Activated CD4-positive, alpha-beta memory T cell treated with anti-CD3 and anti-CD28 coated beads for 36 hours (primary cell): ENCODE measurements at regions of chr7 and their contacts with region 1.

Region 1: DNA sequence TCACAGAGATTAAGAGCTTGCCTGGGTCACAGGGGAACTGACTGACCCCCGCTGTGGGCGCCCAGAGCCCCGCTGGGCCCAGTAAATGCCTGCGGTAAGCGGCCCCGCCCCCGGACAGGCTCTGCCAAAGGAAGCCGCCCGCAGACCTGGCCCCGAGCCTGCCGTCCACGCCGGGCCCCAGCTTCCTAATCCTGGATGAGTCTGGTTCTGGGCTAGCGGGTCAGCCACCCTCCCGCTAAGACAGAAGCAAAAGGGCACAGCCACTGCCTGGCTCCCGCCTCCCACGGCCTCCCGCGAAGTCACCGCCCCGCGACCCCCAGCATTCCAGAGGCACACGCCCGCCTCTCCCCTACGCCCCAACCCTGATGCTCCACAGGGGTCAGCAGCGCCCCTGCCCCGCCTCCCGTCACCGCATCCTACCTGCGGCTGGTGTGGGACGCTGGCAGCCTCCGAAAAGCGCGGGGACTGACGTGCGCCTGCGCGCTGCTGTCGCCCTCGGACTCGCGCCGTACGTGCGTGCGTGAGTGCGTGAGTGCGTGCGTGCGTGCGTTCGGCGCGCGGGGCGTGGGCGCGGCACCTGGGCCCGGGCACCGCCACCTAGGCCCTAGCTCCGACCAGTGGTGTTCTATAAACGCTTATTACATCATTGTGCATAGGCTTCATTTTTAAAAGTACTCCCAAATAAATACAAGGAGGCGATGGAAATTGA is at the start of gene FIGNL1:
- DNase-seq: peak; percentile 90
- H3K4me3 Mint-ChIP-seq: peak within 1 kb of the TSS; percentile 92
- H3K27ac Mint-ChIP-seq: peak within 1 kb of the TSS; percentile 91
- H3K4me1 Mint-ChIP-seq: peaks cover 48% of the 10 kb centered on the region
- H3K27me3 Mint-ChIP-seq: no peaks in the 10 kb centered on the region
- total RNA-seq, gene FIGNL1: 46.2 to 49.0 TPM

Region 2: GRCh38 chr7:50197549-50197948 is 252.5 kb before region 1 on chr7:
- CTCF ChIA-PET with region 1: no interaction called
- POLR2A ChIA-PET with region 1: no interaction called
- intact Hi-C with region 1: loop called (anchors 2 kb)
- DNase-seq: peak; percentile 90
- H3K4me3 Mint-ChIP-seq: peak overlapping the region; percentile 13
- H3K27ac Mint-ChIP-seq: peak overlapping the region; percentile 58
- H3K4me1 Mint-ChIP-seq: peaks cover 34% of the 10 kb centered on the region
- H3K27me3 Mint-ChIP-seq: peaks cover 2% of the 10 kb centered on the region

Region 3: DNA sequence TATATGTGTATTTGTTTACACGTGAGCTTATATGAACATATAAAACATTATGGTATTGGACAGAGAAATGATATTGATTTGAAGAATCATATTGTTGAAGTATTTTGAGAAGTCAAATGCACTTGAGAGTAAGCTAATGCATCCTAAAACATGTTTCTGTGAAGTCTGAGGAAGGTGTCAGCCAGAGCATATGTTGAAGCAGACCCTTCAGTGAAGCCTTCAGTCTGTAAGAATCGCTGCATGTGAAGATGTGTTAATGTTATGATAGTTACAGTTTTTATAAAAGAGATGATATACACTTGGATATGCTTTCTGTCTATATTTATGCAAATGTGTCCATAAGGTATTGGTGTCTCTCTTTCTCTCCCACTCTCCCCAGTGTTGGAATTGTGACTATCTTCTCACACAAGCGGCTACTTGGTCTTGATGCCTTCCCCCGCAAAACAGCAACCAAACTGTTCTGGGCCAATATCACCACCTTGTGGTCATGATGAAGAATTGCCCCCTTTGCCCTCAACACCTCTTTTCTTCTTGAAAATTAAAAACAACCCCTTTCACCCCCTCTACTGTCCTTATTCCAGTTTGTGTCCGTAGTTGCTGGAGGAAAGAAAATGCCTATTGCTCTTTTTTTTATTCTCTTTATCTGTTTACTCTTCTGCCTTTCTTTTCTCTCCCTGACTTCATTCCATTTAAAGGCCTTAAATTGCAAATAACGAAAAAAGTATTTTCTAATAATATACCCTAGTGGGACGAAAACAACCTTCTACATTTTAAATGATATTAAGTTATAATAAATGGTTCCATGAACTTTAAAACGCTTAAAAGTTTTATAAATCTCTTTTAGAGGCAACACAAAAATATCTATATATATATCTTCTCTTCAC is 80.7 kb before region 1 on chr7:
- CTCF ChIA-PET with region 1: interaction called, 4 read pairs
- POLR2A ChIA-PET with region 1: interaction called, 3 read pairs
- intact Hi-C with region 1: loop called (anchors 1 kb)
- DNase-seq: peak; percentile 56
- H3K4me3 Mint-ChIP-seq: no peak overlapping the region
- H3K27ac Mint-ChIP-seq: peak overlapping the region; percentile 93
- H3K4me1 Mint-ChIP-seq: peaks cover 97% of the 10 kb centered on the region
- H3K27me3 Mint-ChIP-seq: no peaks in the 10 kb centered on the region

Region 4: DNA sequence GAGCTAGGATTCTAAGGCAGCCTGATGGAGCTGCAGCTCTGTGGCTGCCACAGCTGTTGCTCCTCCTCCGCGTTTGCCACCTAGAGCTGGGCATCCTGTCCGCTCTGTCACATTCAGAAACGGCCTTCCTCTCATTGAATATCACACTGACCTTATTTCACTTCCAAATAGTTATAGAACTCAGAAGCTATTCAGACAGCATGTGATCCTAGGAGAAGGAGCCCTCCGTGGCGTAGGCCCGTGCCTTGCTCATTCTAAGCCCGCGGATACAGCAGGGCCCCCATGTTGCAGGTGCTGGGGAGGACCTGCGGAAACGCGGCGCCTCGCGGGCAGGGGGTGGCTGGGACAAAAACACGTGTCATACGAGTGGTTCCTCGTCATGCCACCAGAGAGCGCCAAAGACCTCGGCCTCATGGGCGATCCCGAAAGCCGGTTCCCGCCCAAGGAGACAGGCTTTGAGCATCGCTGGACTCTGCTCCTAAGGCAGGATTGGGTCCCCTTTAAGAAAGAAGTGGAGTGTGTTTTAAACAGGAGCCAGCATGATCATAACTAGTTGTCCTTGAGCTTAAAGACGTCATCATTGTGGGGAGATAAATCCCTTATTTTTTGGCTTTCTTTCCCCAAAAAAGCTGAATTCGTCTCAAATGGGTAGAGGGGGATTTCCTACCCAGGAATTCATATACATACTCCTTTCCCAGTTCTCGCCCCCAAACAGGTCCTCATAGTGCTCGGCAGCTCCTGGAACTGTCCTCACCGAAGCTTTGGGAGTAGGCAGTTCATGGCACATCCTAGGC is 18.0 kb after region 1 on chr7:
- CTCF ChIA-PET with region 1: interaction called, 18 read pairs
- POLR2A ChIA-PET with region 1: no interaction called
- intact Hi-C with region 1: no loop called
- DNase-seq: peak; percentile 89
- H3K4me3 Mint-ChIP-seq: no peak overlapping the region
- H3K27ac Mint-ChIP-seq: no peak overlapping the region
- H3K4me1 Mint-ChIP-seq: peaks cover 12% of the 10 kb centered on the region
- H3K27me3 Mint-ChIP-seq: peaks cover 2% of the 10 kb centered on the region

Region 5: DNA sequence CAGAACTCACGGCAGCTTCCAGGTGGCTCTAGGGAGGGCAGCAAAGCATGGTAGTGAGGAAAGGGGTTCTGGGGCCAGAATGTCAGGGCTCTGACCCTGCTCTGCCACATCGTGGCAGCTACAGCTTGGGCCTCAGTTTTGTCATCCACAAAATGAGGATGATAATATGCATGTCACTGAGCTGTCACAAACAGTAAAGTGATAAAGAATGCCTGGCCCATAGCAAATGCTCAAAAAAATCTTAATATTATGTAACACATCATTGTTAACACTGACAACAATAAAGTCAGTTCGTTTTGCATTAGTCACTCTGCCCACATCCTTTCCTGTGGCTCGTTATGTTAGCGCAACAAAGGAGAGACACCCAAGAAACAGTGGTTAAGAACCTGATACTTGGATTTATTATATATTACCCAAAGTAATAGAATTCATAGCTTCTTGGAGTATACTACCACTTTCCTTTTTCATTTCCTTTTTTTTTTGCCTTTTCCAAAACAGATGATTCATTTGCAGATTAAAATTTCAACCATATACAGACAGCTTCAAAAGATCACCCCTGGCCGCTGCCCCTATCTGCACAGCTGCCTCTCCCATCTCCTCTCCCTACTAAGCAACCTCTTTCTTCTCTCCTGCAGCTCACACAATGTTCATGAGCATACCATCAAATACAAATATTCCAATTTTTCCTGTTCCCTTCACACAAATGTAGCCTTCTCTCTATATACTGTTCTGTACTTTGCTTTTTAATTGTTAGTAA is 160.7 kb after region 1 on chr7:
- CTCF ChIA-PET with region 1: no interaction called
- POLR2A ChIA-PET with region 1: no interaction called
- intact Hi-C with region 1: loop called (anchors 1 kb)
- DNase-seq: peak; percentile 71
- H3K4me3 Mint-ChIP-seq: no peak overlapping the region
- H3K27ac Mint-ChIP-seq: no peak overlapping the region
- H3K4me1 Mint-ChIP-seq: peaks cover 30% of the 10 kb centered on the region
- H3K27me3 Mint-ChIP-seq: no peaks in the 10 kb centered on the region

Region 6: DNA sequence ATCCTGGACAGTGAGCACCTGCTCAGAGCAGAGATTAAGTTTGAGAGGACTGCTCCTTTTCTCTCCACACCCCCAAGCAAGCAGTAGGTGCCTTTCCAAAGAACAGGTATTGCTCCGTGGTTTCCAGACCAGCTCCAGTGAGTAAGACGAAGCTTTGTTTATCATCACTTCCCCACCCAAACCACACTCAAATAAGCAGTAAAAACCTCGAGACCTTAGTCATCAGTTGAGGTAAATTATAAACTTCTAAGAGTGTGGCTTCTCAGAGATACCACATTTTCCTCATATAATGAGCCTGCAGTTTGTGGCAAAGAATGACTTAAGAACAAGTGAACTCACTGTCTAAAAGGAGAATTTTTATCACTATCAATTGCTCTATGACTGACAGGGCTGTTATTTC is 382.7 kb after region 1 on chr7:
- CTCF ChIA-PET with region 1: no interaction called
- POLR2A ChIA-PET with region 1: no interaction called
- intact Hi-C with region 1: loop called (anchors 2 kb)
- DNase-seq: peak; percentile 51
- H3K4me3 Mint-ChIP-seq: no peak overlapping the region
- H3K27ac Mint-ChIP-seq: no peak overlapping the region
- H3K4me1 Mint-ChIP-seq: peaks cover 17% of the 10 kb centered on the region
- H3K27me3 Mint-ChIP-seq: peaks cover 33% of the 10 kb centered on the region